ENCODE measurements at regions of chr5 and their contacts with region 1.

Region 1: DNA sequence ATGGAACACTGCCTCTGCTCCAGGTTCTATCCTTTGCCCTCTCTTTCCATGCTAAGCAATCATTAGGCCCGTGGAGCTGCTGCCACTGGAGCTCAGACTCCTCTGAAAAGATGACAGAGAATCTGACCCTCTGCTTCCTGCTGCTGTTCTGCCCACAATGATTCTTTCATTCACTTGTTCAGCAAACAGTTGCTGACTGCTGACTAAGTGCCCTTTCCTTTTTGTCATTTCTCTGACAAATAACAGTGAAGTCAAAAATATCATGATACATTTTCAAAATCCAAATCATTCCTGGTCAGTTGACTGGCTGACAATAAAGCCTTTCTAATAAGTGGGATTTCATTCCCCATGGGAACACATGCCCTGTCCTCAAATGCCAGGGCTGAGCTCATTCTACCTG is 110.1 kb downstream of the SIL1 start:
- DNase-seq: no peak
- H3K4me3 ChIP-seq: no peak overlapping the region
- H3K27ac ChIP-seq: no peak overlapping the region
- H3K4me1 ChIP-seq: peaks cover 11 to 16% of the 10 kb centered on the region in 2 donors
- H3K27me3 ChIP-seq: no peaks in the 10 kb centered on the region
- CTCF ChIP-seq: no peak
- POLR2A ChIP-seq: no peak

Region 2: DNA sequence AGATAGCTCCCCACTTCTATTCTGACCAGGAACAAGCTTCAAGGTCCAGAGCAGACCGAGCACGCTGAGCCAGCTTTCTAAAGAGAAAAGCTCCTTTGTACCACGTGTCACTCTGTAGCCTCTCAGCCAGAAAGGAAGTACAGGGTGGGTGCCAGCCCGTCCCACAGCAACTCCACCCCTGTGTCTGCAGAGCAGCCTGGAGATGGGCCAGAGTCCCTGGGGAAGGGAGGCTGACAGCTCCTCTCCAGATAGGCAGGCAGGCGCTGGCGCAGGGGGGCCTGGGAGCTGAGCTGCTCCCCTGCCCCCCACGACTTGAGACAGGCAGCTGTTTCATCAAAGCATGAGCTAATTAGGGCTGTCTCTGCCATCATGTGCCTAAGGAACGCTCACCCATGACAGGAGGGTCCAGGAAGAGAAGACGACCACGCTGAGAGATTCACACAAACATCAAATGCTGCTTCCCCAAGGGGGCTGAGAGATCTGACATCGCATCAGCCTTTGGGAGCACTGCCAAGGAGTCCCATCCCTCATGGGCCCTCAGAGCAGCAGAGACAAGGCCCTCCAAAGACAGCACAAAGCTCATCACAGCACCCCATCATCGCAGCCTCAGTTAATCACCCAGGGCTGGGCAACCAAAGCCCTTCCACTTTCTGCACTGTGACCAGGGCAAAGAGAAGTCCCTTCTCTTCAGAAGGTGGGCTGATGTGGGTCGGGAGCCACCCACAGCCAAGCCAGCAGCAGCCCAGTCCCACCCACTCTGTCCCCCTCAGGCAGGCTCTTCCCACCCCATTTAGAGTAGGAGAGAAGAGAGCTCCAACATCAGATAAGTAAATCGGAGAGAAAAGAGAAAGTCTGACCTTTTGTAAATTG is 134.4 kb before region 1 on chr5:
- intact Hi-C with region 1: no loop called
- DNase-seq: peak; percentile 96
- H3K4me3 ChIP-seq: no peak overlapping the region
- H3K27ac ChIP-seq: peak overlapping the region; percentile 66 to 87 (median 81)
- H3K4me1 ChIP-seq: peaks cover 59 to 68% of the 10 kb centered on the region in 2 donors
- H3K27me3 ChIP-seq: no peaks in the 10 kb centered on the region
- CTCF ChIP-seq: no peak
- POLR2A ChIP-seq: peak in 1 of 2 donors; percentile 38

Region 3: GRCh38 chr5:139131465-139131864 is 43.4 kb after region 1 on chr5:
- intact Hi-C with region 1: no loop called
- DNase-seq: peak; percentile 83 to 88
- H3K4me3 ChIP-seq: no peak overlapping the region
- H3K27ac ChIP-seq: peak overlapping the region; percentile 81 to 91 (median 90)
- H3K4me1 ChIP-seq: peaks cover 40 to 57% of the 10 kb centered on the region in 2 donors
- H3K27me3 ChIP-seq: no peaks in the 10 kb centered on the region
- CTCF ChIP-seq: no peak
- POLR2A ChIP-seq: peak in 1 of 2 donors; percentile 35

Region 4: GRCh38 chr5:139246394-139246793 is 158.4 kb after region 1 on chr5:
- intact Hi-C with region 1: loop called (anchors 10 kb)
- DNase-seq: no peak
- H3K4me3 ChIP-seq: no peak overlapping the region
- H3K27ac ChIP-seq: no peak overlapping the region
- H3K4me1 ChIP-seq: peaks cover 0 to 6% of the 10 kb centered on the region in 2 donors
- H3K27me3 ChIP-seq: no peaks in the 10 kb centered on the region
- CTCF ChIP-seq: no peak
- POLR2A ChIP-seq: no peak

Region 5: GRCh38 chr5:139287890-139288635 is 200.0 kb after region 1 on chr5:
- intact Hi-C with region 1: no loop called
- DNase-seq: no peak
- H3K4me3 ChIP-seq: no peak overlapping the region
- H3K27ac ChIP-seq: no peak overlapping the region
- H3K4me1 ChIP-seq: peaks cover 1 to 3% of the 10 kb centered on the region in 2 donors
- H3K27me3 ChIP-seq: no peaks in the 10 kb centered on the region
- CTCF ChIP-seq: peak in 4 of 6 experiments; percentile 17 to 24 (median 22)
- POLR2A ChIP-seq: no peak

Region 6: DNA sequence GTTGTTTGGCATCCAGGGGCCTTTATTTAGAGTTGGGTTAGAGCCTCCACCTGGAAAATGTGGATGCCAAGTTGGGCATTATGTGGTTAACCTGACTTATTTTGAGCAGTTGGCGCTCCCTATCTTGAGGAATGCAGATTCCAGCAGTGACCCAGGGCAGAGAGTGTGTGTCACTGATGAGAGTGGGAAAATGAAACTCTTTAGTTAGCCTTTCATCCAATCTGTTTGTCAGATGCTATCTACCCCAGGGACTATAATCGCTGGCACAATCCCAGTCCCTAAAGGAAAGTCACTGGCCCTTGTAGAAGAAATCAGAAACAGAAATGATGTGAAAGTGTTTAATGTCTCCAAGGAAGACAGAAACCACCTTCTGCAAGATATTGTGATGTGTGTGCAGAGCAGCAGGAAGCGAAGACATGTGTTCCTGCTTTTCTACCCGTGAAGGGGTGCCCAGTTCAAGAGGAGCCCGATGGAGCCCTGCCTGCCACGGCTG is 404.7 kb after region 1 on chr5:
- intact Hi-C with region 1: no loop called
- DNase-seq: peak in 1 of 2 donors; percentile 10
- H3K4me3 ChIP-seq: no peak overlapping the region
- H3K27ac ChIP-seq: peak overlapping the region in 1 of 3 donors; percentile 5
- H3K4me1 ChIP-seq: peaks cover 0 to 21% of the 10 kb centered on the region in 2 donors
- H3K27me3 ChIP-seq: no peaks in the 10 kb centered on the region
- CTCF ChIP-seq: no peak
- POLR2A ChIP-seq: no peak